Naive thymus-derived CD4-positive, alpha-beta T cell (primary cell): ENCODE measurements at regions of chr14 and their contacts with region 1.

Region 1: DNA sequence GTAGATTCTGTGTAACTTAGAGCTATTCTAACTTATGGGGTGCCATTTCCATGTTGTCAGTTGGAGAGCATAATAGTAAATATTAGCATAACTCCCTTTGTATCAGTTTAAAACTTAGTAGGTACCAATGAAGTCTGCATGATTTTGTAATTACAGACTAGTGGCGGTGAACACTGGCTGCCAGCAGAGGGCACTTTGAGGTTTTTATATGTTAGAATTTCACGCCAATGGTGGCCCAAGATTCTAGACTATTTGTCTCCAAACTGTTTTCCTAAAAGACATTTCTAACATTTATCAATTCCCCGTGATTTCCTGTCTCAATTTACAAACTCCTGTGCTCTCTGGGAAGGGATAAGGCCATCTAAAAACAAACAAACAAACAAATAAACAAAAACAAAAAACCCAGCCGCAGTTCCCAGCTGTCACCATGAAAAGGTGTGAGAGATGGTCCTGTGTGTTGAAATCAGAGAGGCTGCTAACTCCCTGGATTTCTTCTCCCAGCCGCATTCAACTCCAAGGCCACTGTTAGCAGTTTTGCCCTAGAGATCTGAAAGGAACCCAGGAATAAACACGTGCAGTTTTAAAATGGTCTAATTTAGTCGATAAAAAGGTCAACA is 57.6 kb downstream of the BRMS1L start:
- DNase-seq: peak in 5 of 9 donors; percentile 14 to 32 (median 23)
- ATAC-seq: no peak
- H3K4me3 ChIP-seq: no peak overlapping the region
- H3K4me3 Mint-ChIP-seq: no peak overlapping the region
- H3K27ac ChIP-seq: no peak overlapping the region
- H3K27ac Mint-ChIP-seq: no peak overlapping the region
- H3K4me1 ChIP-seq: no peaks in the 10 kb centered on the region
- H3K4me1 Mint-ChIP-seq: no peaks in the 10 kb centered on the region
- H3K27me3 ChIP-seq: no peaks in the 10 kb centered on the region
- H3K27me3 Mint-ChIP-seq: peaks cover 1 to 10% (median 9%) of the 10 kb centered on the region in 5 donors

Region 2: DNA sequence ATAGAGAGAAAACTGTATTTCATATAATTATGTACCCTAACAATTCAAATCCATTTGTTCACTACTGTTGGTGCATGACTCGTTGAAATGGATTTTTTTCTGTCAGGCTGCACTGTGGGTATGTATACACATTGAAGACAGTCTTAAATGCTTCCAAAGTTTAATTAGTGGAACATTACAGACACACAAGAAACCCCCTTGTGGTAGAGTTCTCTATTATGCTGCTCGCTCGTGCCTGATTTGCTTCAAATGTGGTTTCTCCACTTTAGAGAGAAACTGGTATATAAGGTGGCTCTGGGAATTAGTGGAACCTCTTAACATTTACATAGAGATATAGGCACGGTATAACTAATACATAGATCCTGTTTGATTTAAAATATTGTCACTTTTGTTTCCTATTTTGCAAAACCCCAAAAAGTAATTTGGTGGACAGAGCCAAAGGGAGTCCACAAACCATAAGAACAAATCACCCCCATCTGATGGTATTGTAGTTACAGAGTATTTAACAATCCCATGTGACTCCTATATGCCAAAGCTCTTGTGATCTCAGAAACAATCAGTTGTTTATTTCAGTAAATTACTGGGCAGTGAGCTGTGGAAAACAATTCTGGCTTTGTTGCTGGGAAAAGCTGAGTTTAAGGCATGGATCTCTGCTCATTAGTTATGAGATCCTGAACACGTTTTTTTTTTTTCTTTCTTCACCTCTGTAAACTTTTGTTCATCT is 101.9 kb after region 1 on chr14:
- CTCF ChIA-PET with region 1: no interaction called
- POLR2A ChIA-PET with region 1: no interaction called
- intact Hi-C with region 1: loop called in 1 of 2 experiments (anchors 5 kb)
- DNase-seq: no peak
- ATAC-seq: no peak
- H3K4me3 ChIP-seq: no peak overlapping the region
- H3K4me3 Mint-ChIP-seq: no peak overlapping the region
- H3K27ac ChIP-seq: no peak overlapping the region
- H3K27ac Mint-ChIP-seq: no peak overlapping the region
- H3K4me1 ChIP-seq: no peaks in the 10 kb centered on the region
- H3K4me1 Mint-ChIP-seq: peaks cover 0 to 8% (median 0%) of the 10 kb centered on the region in 7 donors
- H3K27me3 ChIP-seq: no peaks in the 10 kb centered on the region
- H3K27me3 Mint-ChIP-seq: peaks cover 0 to 4% (median 2%) of the 10 kb centered on the region in 5 donors

Region 3: DNA sequence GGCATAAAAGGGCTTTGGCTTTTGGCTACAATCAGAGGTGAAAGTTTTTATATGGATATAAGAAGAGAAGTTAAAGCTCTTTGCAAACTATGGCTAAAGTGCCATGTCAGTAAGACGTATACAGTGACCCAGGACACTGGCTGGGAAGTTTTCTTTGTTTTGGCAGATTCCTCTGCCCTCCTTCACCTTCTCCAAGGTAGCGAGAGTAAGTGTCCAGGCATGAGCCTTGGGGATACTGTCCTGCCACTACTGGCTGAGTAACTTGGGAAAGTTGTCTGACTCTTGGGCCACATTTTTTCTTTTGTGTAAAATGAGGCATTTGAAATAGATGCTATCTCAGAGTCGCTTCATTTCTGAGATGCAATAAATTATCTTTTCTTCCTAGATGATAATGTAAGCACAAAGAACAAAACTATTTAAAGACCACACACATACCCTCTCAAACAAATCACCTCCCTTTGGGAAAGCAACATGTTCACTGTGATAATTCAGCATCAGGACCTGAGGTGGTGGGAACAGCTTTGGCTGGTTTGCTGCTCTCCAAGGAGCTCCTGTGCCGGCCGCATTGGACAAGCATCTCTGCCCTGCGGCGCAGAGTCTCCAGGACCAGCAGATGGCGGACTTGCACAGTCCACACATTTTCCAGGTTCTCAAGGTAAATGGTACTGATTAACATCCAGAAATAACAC is 186.4 kb after region 1 on chr14:
- CTCF ChIA-PET with region 1: interaction called, 20 read pairs
- POLR2A ChIA-PET with region 1: no interaction called
- intact Hi-C with region 1: loop called (anchors 1 kb)
- DNase-seq: no peak
- ATAC-seq: no peak
- H3K4me3 ChIP-seq: no peak overlapping the region
- H3K4me3 Mint-ChIP-seq: no peak overlapping the region
- H3K27ac ChIP-seq: no peak overlapping the region
- H3K27ac Mint-ChIP-seq: no peak overlapping the region
- H3K4me1 ChIP-seq: no peaks in the 10 kb centered on the region
- H3K4me1 Mint-ChIP-seq: peaks cover 0 to 4% (median 0%) of the 10 kb centered on the region in 7 donors
- H3K27me3 ChIP-seq: no peaks in the 10 kb centered on the region
- H3K27me3 Mint-ChIP-seq: peaks cover 20 to 52% (median 31%) of the 10 kb centered on the region in 5 donors

Region 4: GRCh38 chr14:36553656-36554260 is 670.0 kb after region 1 on chr14:
- CTCF ChIA-PET with region 1: no interaction called
- POLR2A ChIA-PET with region 1: no interaction called
- intact Hi-C with region 1: loop called in 1 of 2 experiments (anchors 2 kb)
- DNase-seq: peak in 1 of 9 donors; percentile 3
- ATAC-seq: no peak
- H3K4me3 ChIP-seq: no peak overlapping the region
- H3K4me3 Mint-ChIP-seq: no peak overlapping the region
- H3K27ac ChIP-seq: no peak overlapping the region
- H3K27ac Mint-ChIP-seq: no peak overlapping the region
- H3K4me1 ChIP-seq: no peaks in the 10 kb centered on the region
- H3K4me1 Mint-ChIP-seq: peaks cover 0 to 6% (median 0%) of the 10 kb centered on the region in 7 donors
- H3K27me3 ChIP-seq: no peaks in the 10 kb centered on the region
- H3K27me3 Mint-ChIP-seq: peaks cover 4 to 23% (median 9%) of the 10 kb centered on the region in 5 donors

Region 5: GRCh38 chr14:36941783-36942521 is 1058.2 kb after region 1 on chr14:
- CTCF ChIA-PET with region 1: no interaction called
- POLR2A ChIA-PET with region 1: no interaction called
- intact Hi-C with region 1: loop called in 1 of 2 experiments (anchors 5 kb)
- DNase-seq: peak in 6 of 9 donors; percentile 1 to 52 (median 14)
- ATAC-seq: no peak
- H3K4me3 ChIP-seq: no peak overlapping the region
- H3K4me3 Mint-ChIP-seq: no peak overlapping the region
- H3K27ac ChIP-seq: no peak overlapping the region
- H3K27ac Mint-ChIP-seq: no peak overlapping the region
- H3K4me1 ChIP-seq: no peaks in the 10 kb centered on the region
- H3K4me1 Mint-ChIP-seq: no peaks in the 10 kb centered on the region
- H3K27me3 ChIP-seq: no peaks in the 10 kb centered on the region
- H3K27me3 Mint-ChIP-seq: peaks cover 0 to 5% (median 5%) of the 10 kb centered on the region in 5 donors